ENCODE measurements at regions of chr17 and their contacts with region 1.

Region 1: DNA sequence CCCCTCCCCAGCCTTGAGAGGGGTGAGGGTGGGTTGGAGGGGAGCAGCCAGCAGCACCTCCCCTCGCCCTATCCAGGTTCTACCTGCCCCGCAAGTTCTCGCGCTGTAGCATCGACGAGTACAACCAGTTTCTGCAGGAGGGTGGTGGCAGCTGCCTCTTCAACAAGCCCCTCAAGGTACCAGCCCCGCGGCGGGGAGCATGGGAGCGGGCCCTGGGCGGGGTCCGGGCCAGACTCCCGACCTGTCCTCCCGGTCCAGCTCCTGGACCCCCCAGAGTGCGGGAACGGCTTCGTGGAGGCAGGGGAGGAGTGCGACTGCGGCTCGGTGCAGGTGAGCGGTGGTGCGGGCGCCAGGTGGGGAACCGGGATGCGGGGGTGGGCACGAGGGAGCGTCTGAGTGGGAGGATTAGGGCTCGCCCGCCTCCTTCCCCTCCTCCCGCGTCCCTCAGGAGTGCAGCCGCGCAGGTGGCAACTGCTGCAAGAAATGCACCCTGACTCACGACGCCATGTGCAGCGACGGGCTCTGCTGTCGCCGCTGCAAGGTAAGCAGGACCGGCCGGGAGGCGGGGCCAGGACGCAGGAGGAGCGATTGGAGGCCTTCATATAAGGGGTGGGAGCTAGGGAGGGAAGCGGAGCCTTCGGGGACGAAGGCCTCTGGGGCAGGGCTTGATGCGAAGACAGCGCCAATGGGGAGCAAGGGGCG is 16.5 kb downstream of the ADAM11 start:
- DNase-seq: peak; percentile 99 to 100
- H3K4me3 ChIP-seq: peak overlapping the region; percentile 46
- H3K4me1 ChIP-seq: peaks cover 7% of the 10 kb centered on the region
- H3K27me3 ChIP-seq: no peaks in the 10 kb centered on the region

Region 2: DNA sequence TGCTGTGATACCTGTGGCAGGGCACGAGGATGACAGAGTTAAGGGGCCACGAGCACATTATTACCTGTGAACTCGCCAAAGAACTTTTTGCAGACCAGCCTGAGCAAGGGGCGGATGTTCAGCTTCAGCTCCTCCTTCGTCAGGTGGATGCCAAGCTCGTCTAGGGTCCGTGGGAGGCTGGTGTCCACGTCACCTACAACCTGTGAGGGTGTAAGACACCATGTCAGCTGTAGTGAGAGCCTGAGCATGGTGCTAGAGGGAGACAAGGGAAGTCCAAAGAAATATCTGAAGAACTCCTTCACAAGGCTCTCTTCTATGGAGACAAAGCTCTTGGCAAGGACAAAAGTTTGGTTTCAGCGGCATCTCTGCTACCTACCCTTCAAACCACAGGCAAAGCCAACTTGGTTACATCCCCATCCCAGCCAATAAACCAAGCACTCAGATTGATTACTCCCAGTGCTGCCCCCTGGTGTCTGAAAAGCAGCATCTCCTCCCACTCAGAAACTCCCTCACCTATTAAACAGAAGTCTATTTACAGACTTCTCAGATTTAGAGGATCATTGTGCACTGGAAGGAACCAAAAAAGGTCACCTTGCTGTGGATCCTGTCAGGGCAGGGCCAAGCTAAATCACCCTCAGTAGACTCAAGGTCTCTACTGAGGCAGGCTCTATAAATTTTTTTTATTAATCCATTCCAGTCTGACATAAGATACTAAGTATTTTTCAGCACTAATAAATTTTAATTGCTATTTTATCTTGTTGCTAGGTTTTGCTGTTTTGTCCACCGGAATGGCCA is 89.8 kb after region 1 on chr17:
- in situ Hi-C with region 1: loop called (anchors 5 kb)
- DNase-seq: peak; percentile 73 to 87
- H3K4me3 ChIP-seq: no peak overlapping the region
- H3K4me1 ChIP-seq: no peaks in the 10 kb centered on the region
- H3K27me3 ChIP-seq: no peaks in the 10 kb centered on the region

Measured in HAP-1 (cell line).